Mammary epithelial cell (primary cell): ENCODE measurements at regions of chr17 and their contacts with region 1.

Region 1: DNA sequence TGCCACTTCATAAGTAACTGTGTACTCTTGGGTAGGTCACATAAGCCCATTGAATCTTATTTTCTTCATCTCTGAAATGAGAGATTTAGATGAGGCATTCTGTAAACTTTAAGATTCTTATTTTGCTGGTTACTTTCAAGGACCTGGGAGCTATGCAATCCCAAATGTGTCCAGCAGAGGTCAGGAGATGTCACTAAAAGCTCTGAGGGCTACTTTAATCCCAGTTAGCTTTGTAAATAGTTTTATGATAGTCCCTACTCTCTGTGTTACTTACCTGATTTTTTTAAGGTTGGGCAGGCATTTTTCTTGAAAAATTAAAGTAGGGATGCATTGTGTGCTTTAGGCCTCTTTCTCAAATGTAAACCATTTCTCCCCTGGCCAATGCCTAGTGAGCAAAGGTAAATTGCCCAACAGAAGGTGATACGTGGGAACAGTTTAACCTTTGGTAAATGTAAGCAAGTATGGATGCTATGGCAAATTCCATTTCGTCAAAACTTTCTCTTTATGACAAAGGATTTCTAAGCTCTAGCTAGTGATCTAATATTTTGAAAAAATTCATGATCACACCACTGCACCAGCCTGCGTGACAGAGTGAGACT is 57.1 kb upstream of the WSB1 start:
- DNase-seq: peak; percentile 52
- H3K4me3 ChIP-seq: no peak overlapping the region
- H3K27ac ChIP-seq: no peak overlapping the region
- H3K4me1 ChIP-seq: peaks cover 7% of the 10 kb centered on the region
- H3K27me3 ChIP-seq: no peaks in the 10 kb centered on the region
- CTCF ChIP-seq: peak; percentile 90 to 96

Region 2: DNA sequence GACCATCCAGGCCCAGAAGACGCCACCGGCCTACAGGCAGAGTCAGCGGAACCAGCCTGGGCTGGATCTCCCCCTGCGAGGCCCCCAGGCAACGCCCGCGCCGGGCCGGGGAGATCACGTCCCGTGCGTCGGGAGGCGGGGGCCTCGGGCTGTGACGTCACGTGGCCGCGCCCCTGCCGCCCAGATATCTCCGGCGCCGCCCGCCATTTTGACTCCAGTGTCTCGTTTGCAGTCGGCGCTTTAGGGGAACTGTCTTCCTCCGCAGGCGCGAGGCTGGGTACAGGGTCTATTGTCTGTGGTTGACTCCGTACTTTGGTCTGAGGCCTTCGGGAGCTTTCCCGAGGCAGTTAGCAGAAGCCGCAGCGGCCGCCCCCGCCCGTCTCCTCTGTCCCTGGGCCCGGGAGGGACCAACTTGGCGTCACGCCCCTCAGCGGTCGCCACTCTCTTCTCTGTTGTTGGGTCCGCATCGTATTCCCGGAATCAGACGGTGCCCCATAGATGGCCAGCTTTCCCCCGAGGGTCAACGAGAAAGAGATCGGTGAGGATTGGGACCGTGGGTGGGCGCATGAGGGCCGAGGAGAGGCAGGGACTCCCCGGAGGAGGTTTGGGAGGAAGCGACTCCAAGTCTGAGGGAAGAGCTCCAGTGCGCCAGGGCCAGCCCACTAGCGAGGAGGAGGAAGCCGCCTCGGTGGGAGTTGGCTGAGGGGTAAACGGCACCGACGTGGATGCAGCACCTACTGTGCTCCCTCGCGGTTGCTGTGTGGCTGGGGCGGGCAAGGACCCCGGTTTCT is 57.3 kb after region 1 on chr17 and contains the start of gene WSB1:
- CTCF ChIA-PET with region 1: no interaction called
- dilution Hi-C with region 1: no loop called
- in situ Hi-C with region 1: loop called in 1 of 2 experiments (anchors 10 kb)
- intact Hi-C with region 1: loop called (anchors 2 kb)
- DNase-seq: peak; percentile 84
- H3K4me3 ChIP-seq: peak within 1 kb of the TSS; percentile 75 to 97 (median 94)
- H3K27ac ChIP-seq: peak within 1 kb of the TSS; percentile 93
- H3K4me1 ChIP-seq: peaks cover 16% of the 10 kb centered on the region
- H3K27me3 ChIP-seq: no peaks in the 10 kb centered on the region
- CTCF ChIP-seq: peak in 1 of 2 donors; percentile 3
- total RNA-seq, gene WSB1: 93.0 to 119 TPM

Region 3: GRCh38 chr17:27332485-27333409 is 95.9 kb after region 1 on chr17:
- CTCF ChIA-PET with region 1: interaction called, 14 read pairs
- dilution Hi-C with region 1: no loop called
- in situ Hi-C with region 1: loop called in 1 of 2 experiments (anchors 5 kb)
- intact Hi-C with region 1: loop called (anchors 1 kb)
- DNase-seq: peak; percentile 98
- H3K4me3 ChIP-seq: peak overlapping the region; percentile 51 to 62 (median 57)
- H3K27ac ChIP-seq: peak overlapping the region; percentile 89
- H3K4me1 ChIP-seq: peaks cover 30% of the 10 kb centered on the region
- H3K27me3 ChIP-seq: no peaks in the 10 kb centered on the region
- CTCF ChIP-seq: peak; percentile 65 to 91